Heart left ventricle (tissue), 16 donors: ENCODE measurements at regions of chr1 and their contacts with region 1.

Region 1: GRCh38 chr1:209354111-209354839 is 229.2 kb upstream of the CAMK1G start:
- DNase-seq: peak; percentile 54 to 80 (median 71)
- ATAC-seq: peak; percentile 78 to 92 (median 90)
- H3K4me3 ChIP-seq: no peak overlapping the region
- H3K27ac ChIP-seq: no peak overlapping the region
- H3K4me1 ChIP-seq: peaks cover 0 to 10% (median 4%) of the 10 kb centered on the region in 12 donors
- H3K27me3 ChIP-seq: no peaks in the 10 kb centered on the region
- CTCF ChIP-seq: peak; percentile 67 to 88 (median 82)
- POLR2A ChIP-seq: no peak

Region 2: DNA sequence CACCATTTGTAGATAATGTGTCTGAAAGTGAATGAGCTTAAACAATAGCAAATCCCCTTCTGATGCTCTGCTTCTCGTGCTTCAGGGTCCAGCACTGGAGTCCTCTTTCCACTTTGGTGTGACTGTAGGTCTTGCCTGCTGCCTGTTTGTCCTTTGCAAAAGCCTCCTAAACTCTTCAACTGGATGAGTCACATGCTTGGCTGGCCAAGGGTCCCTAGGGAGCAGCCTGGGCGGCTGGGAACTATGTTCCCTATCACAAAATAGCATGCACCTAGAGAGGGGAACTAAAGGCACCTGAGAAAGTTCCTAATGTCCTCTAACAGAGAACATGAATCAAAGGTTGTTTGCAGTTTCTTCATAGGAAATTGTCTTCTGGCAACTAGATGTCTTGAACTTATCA is 502.9 kb before region 1 on chr1:
- intact Hi-C with region 1: no loop called
- DNase-seq: no peak
- ATAC-seq: no peak
- H3K4me3 ChIP-seq: no peak overlapping the region
- H3K27ac ChIP-seq: no peak overlapping the region
- H3K4me1 ChIP-seq: no peaks in the 10 kb centered on the region
- H3K27me3 ChIP-seq: no peaks in the 10 kb centered on the region
- CTCF ChIP-seq: no peak
- POLR2A ChIP-seq: no peak

Region 3: DNA sequence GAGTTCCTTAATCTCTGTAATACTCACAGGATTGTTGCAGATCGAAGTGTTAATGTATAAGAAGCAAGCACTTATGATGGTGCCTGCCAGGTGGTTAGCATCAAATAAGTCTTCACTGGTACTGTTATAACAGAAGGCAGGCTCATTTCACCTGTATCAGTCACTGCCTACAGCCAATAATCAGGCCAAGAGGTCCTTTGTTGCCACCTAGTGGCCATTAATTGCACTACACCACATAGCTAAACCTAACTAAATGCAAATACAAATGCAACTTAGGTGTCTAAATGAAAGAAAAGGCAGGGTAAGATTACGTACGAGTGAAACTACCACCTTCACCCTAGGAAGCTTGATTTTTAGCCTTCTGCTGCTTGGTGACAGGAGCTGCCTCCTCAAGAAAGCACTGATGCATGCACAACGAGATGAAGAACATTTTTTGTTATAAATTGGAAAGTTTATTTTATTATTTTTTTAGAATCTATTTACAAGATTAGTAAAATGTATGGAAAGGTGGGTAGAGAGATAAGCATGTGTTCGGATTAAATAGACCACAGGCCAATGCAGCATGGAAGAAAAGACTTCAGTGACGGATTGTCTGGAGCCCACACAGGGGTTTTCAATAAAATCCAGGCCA is 105.5 kb before region 1 on chr1:
- intact Hi-C with region 1: loop called in 1 of 10 experiments (anchors 5 kb)
- DNase-seq: peak in 1 of 5 donors; percentile 34
- ATAC-seq: peak in 3 of 4 donors; percentile 54 to 61 (median 55)
- H3K4me3 ChIP-seq: no peak overlapping the region
- H3K27ac ChIP-seq: no peak overlapping the region
- H3K4me1 ChIP-seq: no peaks in the 10 kb centered on the region
- H3K27me3 ChIP-seq: peaks cover 0 to 8% (median 0%) of the 10 kb centered on the region in 9 donors
- CTCF ChIP-seq: peak; percentile 83 to 98 (median 93)
- POLR2A ChIP-seq: no peak

Region 4: GRCh38 chr1:209435654-209436566 is 81.6 kb after region 1 on chr1:
- intact Hi-C with region 1: loop called in 1 of 10 experiments (anchors 10 kb)
- DNase-seq: peak; percentile 46 to 74 (median 53)
- ATAC-seq: peak in 3 of 4 donors; percentile 58 to 71 (median 65)
- H3K4me3 ChIP-seq: no peak overlapping the region
- H3K27ac ChIP-seq: no peak overlapping the region
- H3K4me1 ChIP-seq: no peaks in the 10 kb centered on the region
- H3K27me3 ChIP-seq: peaks cover 0 to 3% (median 0%) of the 10 kb centered on the region in 9 donors
- CTCF ChIP-seq: peak; percentile 49 to 77 (median 68)
- POLR2A ChIP-seq: no peak